ENCODE measurements at regions of chr6 and their contacts with region 1.

Region 1: DNA sequence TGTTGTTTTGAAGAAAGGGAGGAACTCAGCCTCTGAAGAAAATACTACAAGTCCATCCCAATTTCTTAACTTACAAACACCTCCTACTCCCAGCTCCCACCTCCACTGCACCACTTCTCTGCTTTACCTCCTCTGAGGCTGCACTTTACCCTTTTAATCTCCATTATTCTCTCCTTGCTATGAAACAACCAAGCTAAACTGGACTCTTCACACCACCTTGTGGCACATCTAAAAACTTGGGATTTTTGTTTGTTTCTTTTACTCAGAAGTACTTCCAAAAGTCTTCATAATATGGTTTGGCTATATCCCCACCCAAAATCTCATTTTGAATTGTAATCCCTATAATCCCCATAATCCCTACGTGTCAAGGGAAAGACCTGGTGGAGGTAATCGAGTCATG is 142.2 kb downstream of the MOXD1 start:
- DNase-seq: peak; percentile 60
- H3K4me3 ChIP-seq: no peak overlapping the region
- H3K27ac ChIP-seq: no peak overlapping the region
- H3K4me1 ChIP-seq: no peaks in the 10 kb centered on the region
- H3K27me3 ChIP-seq: no peaks in the 10 kb centered on the region
- CTCF ChIP-seq: peak; percentile 35 to 36
- POLR2A ChIP-seq: no peak

Region 2: GRCh38 chr6:131914967-131915751 is 343.9 kb before region 1 on chr6:
- CTCF ChIA-PET with region 1: interaction called, 24 read pairs
- POLR2A ChIA-PET with region 1: no interaction called
- dilution Hi-C with region 1: no loop called
- intact Hi-C with region 1: no loop called
- DNase-seq: peak; percentile 79
- H3K4me3 ChIP-seq: no peak overlapping the region
- H3K27ac ChIP-seq: no peak overlapping the region
- H3K4me1 ChIP-seq: peaks cover 2% of the 10 kb centered on the region
- H3K27me3 ChIP-seq: peaks cover 0 to 3% of the 10 kb centered on the region in 2 experiments
- CTCF ChIP-seq: peak; percentile 73 to 76
- POLR2A ChIP-seq: no peak

Region 3: DNA sequence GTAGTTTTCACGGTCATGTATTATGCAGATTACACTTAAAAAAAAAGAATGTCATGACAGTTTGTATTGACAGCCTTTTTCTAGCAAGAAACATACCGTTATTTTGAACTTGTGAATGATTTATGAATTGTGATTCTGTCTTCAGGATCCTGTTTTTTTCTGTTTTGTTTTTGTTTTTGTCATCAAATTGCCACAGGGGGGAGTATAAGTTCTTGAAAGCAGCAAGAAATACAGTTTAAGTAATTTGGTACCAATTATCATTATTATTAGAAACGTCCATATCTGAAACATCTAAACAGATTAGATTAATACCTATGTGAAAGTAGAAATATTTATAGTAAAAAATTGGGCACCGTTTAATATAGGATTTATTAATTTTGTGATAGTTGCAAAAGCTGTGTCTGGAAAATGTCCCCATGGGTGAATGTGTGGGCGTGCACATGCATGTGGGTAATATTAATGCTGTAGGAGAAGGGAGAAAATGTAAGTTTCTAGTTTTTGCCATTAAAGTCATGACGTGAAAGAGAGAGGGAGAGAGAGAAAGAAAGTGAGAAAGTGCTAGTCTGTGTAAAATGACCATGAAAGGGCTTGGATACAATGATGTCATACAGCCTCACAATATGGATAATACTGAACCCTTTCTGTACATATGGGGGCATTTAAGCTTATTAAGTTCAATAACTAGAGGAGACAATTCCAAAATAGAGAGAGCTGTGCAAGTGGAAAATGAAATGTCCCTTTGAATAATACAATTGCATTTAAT is 298.5 kb before region 1 on chr6:
- CTCF ChIA-PET with region 1: interaction called, 19 read pairs
- POLR2A ChIA-PET with region 1: no interaction called
- dilution Hi-C with region 1: no loop called
- intact Hi-C with region 1: loop called (anchors 1 kb)
- DNase-seq: peak; percentile 76
- H3K4me3 ChIP-seq: no peak overlapping the region
- H3K27ac ChIP-seq: peak overlapping the region; percentile 19
- H3K4me1 ChIP-seq: peaks cover 11% of the 10 kb centered on the region
- H3K27me3 ChIP-seq: no peaks in the 10 kb centered on the region
- CTCF ChIP-seq: peak in 1 of 2 donors; percentile 12
- POLR2A ChIP-seq: no peak

Region 4: GRCh38 chr6:132270726-132271402 is 11.8 kb after region 1 on chr6:
- CTCF ChIA-PET with region 1: interaction called, 16 read pairs
- POLR2A ChIA-PET with region 1: no interaction called
- dilution Hi-C with region 1: no loop called
- intact Hi-C with region 1: no loop called
- DNase-seq: peak; percentile 83
- H3K4me3 ChIP-seq: no peak overlapping the region
- H3K27ac ChIP-seq: no peak overlapping the region
- H3K4me1 ChIP-seq: no peaks in the 10 kb centered on the region
- H3K27me3 ChIP-seq: peaks cover 0 to 4% of the 10 kb centered on the region in 2 experiments
- CTCF ChIP-seq: no peak
- POLR2A ChIP-seq: no peak

Region 5: GRCh38 chr6:132537145-132537544 is 278.1 kb after region 1 on chr6:
- CTCF ChIA-PET with region 1: no interaction called
- POLR2A ChIA-PET with region 1: no interaction called
- dilution Hi-C with region 1: no loop called
- intact Hi-C with region 1: no loop called
- DNase-seq: no peak
- H3K4me3 ChIP-seq: no peak overlapping the region
- H3K27ac ChIP-seq: no peak overlapping the region
- H3K4me1 ChIP-seq: no peaks in the 10 kb centered on the region
- H3K27me3 ChIP-seq: peaks cover 6 to 43% of the 10 kb centered on the region in 2 experiments
- CTCF ChIP-seq: no peak
- POLR2A ChIP-seq: no peak

Region 6: GRCh38 chr6:132623106-132623845 is 364.2 kb after region 1 on chr6:
- CTCF ChIA-PET with region 1: no interaction called
- POLR2A ChIA-PET with region 1: no interaction called
- dilution Hi-C with region 1: no loop called
- intact Hi-C with region 1: no loop called
- DNase-seq: no peak
- H3K4me3 ChIP-seq: no peak overlapping the region
- H3K27ac ChIP-seq: no peak overlapping the region
- H3K4me1 ChIP-seq: no peaks in the 10 kb centered on the region
- H3K27me3 ChIP-seq: no peaks in the 10 kb centered on the region
- CTCF ChIP-seq: no peak
- POLR2A ChIP-seq: no peak